HEK293T (cell line): ENCODE measurements at regions of chr17 and their contacts with region 1.

Region 1: GRCh38 chr17:74748529-74749365 is at the start of gene NHERF1:
- DNase-seq: peak; percentile 98

Region 2: GRCh38 chr17:74736513-74737298 is 12.0 kb before region 1 on chr17 and contains the start of gene RAB37:
- CTCF ChIA-PET with region 1: interaction called, 32 read pairs
- POLR2A ChIA-PET with region 1: no interaction called
- DNase-seq: no peak

Region 3: GRCh38 chr17:74770498-74771318 is 22.0 kb after region 1 on chr17:
- CTCF ChIA-PET with region 1: interaction called, 13 read pairs
- POLR2A ChIA-PET with region 1: interaction called, 22 read pairs
- DNase-seq: peak; percentile 69

Region 4: GRCh38 chr17:74776044-74776977 is 27.6 kb after region 1 on chr17 and contains the start of gene NAT9:
- CTCF ChIA-PET with region 1: interaction called, 13 read pairs
- POLR2A ChIA-PET with region 1: interaction called, 22 read pairs
- DNase-seq: peak; percentile 100

Region 5: GRCh38 chr17:74790161-74791054 is 41.7 kb after region 1 on chr17:
- CTCF ChIA-PET with region 1: interaction called, 10 read pairs
- POLR2A ChIA-PET with region 1: no interaction called
- DNase-seq: no peak